ENCODE measurements at regions of chr15 and their contacts with region 1.

Region 1: GRCh38 chr15:71800835-71801745 is 9.3 kb upstream of the NR2E3 start:
- DNase-seq: peak; percentile 77
- H3K4me3 ChIP-seq: no peak overlapping the region
- H3K27ac ChIP-seq: no peak overlapping the region
- H3K4me1 ChIP-seq: no peaks in the 10 kb centered on the region
- H3K27me3 ChIP-seq: no peaks in the 10 kb centered on the region
- CTCF ChIP-seq: peak; percentile 71 to 81
- POLR2A ChIP-seq: no peak

Region 2: DNA sequence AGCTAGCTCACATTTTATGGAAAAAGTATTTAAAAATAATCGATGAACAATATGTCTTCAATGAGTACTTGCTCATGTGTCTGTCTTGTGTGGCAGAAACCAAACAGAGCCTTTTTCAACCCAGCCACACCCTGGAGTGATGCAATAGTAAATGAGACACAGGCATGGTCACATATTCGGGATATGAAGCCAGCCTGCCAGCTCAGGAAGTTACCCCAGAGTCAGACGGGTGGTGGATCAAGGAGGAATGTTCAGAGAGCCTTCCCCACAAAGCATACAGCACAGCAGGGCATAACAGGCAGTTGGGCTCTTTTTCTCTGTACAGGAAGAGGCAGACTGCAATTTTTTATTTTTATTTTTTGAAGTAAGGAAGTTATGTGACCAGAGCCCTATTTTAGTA is 974.5 kb before region 1 on chr15:
- CTCF ChIA-PET with region 1: no interaction called
- POLR2A ChIA-PET with region 1: no interaction called
- dilution Hi-C with region 1: no loop called
- intact Hi-C with region 1: loop called (anchors 1 kb)
- DNase-seq: peak; percentile 36
- H3K4me3 ChIP-seq: no peak overlapping the region
- H3K27ac ChIP-seq: no peak overlapping the region
- H3K4me1 ChIP-seq: no peaks in the 10 kb centered on the region
- H3K27me3 ChIP-seq: no peaks in the 10 kb centered on the region
- CTCF ChIP-seq: no peak
- POLR2A ChIP-seq: no peak

Region 3: GRCh38 chr15:71294886-71295638 is 506.0 kb before region 1 on chr15:
- CTCF ChIA-PET with region 1: no interaction called
- POLR2A ChIA-PET with region 1: no interaction called
- dilution Hi-C with region 1: no loop called
- intact Hi-C with region 1: loop called (anchors 2 kb)
- DNase-seq: peak; percentile 99
- H3K4me3 ChIP-seq: no peak overlapping the region
- H3K27ac ChIP-seq: peak overlapping the region; percentile 97
- H3K4me1 ChIP-seq: peaks cover 35% of the 10 kb centered on the region
- H3K27me3 ChIP-seq: no peaks in the 10 kb centered on the region
- CTCF ChIP-seq: no peak
- POLR2A ChIP-seq: peak; percentile 81

Region 4: GRCh38 chr15:71532994-71533393 is 268.1 kb before region 1 on chr15:
- CTCF ChIA-PET with region 1: no interaction called
- POLR2A ChIA-PET with region 1: no interaction called
- dilution Hi-C with region 1: no loop called
- intact Hi-C with region 1: loop called (anchors 2 kb)
- DNase-seq: no peak
- H3K4me3 ChIP-seq: no peak overlapping the region
- H3K27ac ChIP-seq: no peak overlapping the region
- H3K4me1 ChIP-seq: no peaks in the 10 kb centered on the region
- H3K27me3 ChIP-seq: peaks cover 0 to 2% of the 10 kb centered on the region in 2 experiments
- CTCF ChIP-seq: peak; percentile 37 to 57
- POLR2A ChIP-seq: no peak

Region 5: GRCh38 chr15:71651750-71652186 is 149.3 kb before region 1 on chr15:
- CTCF ChIA-PET with region 1: no interaction called
- POLR2A ChIA-PET with region 1: no interaction called
- dilution Hi-C with region 1: no loop called
- intact Hi-C with region 1: loop called (anchors 2 kb)
- DNase-seq: peak; percentile 64
- H3K4me3 ChIP-seq: no peak overlapping the region
- H3K27ac ChIP-seq: no peak overlapping the region
- H3K4me1 ChIP-seq: peaks cover 15% of the 10 kb centered on the region
- H3K27me3 ChIP-seq: peaks cover 0 to 2% of the 10 kb centered on the region in 2 experiments
- CTCF ChIP-seq: peak; percentile 38 to 43
- POLR2A ChIP-seq: no peak

Region 6: DNA sequence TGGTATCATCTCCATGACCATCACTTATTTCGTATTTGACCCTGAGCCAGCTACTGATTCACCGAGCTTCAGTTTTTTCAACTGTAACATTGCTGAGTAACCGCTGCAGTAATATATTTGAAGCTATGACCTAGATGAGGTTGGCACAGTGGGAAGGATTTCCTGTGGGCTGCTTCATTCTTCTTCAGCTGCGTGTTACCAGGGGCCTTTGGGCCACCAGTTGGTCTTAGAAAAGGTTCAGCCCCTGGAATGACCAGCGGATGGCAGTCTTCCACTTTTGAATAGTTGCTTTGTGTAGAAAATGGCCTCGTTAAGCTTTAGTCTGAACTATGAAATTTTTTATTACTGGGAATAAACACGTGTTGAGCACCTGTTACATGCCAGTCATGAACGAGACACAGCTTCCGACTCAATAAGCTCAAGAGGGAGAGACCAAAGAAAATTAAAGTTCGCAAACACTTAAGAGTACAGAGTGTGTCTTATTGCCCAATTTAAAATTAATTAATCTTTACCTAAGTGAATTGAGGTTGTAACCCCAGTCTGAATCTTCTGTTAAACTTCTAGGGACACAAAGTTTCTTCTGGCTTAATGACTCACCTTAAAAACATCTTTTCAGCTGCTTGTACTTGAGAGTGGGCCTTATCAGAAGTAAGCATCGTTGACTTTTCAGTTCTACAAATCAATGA is 48.3 kb before region 1 on chr15:
- CTCF ChIA-PET with region 1: interaction called, 235 read pairs
- POLR2A ChIA-PET with region 1: interaction called, 3 read pairs
- dilution Hi-C with region 1: no loop called
- intact Hi-C with region 1: loop called (anchors 1 kb)
- DNase-seq: peak; percentile 92
- H3K4me3 ChIP-seq: no peak overlapping the region
- H3K27ac ChIP-seq: peak overlapping the region; percentile 54
- H3K4me1 ChIP-seq: peaks cover 47% of the 10 kb centered on the region
- H3K27me3 ChIP-seq: no peaks in the 10 kb centered on the region
- CTCF ChIP-seq: peak; percentile 71 to 83
- POLR2A ChIP-seq: no peak

Region 7: DNA sequence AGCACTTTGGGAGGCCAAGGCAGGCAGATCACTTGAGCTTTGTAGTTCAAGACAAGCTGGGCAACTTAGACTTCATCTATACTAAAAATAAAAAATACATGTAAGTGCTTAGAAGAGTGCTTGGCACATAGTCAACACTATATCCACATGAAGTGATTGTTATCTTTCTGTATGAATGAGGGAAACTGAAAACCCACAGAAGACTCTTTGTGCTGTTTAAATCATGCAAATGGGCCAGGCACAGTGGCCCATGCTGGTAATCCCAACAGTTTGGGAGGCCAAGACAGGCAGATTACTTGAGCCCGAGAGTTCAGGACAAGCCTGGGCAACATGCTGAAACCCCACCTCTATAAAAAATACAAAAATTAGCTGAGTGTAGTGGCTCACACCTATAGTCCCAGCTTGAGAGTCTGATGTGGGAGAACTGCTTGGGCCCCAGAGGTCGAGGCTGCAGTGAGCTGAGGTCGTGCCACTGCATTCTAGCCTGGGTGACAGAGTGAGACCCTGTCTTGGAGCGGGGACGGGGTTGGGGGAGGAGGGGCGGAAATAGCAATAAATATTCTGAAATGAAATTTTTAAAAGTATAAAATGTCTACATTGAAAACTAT is 139.0 kb after region 1 on chr15:
- CTCF ChIA-PET with region 1: no interaction called
- POLR2A ChIA-PET with region 1: no interaction called
- dilution Hi-C with region 1: no loop called
- intact Hi-C with region 1: no loop called
- DNase-seq: no peak
- H3K4me3 ChIP-seq: no peak overlapping the region
- H3K27ac ChIP-seq: no peak overlapping the region
- H3K4me1 ChIP-seq: no peaks in the 10 kb centered on the region
- H3K27me3 ChIP-seq: no peaks in the 10 kb centered on the region
- CTCF ChIP-seq: no peak
- POLR2A ChIP-seq: no peak

Region 8: GRCh38 chr15:72155635-72156616 is 354.8 kb after region 1 on chr15:
- CTCF ChIA-PET with region 1: interaction called, 97 read pairs
- POLR2A ChIA-PET with region 1: no interaction called
- dilution Hi-C with region 1: no loop called
- intact Hi-C with region 1: loop called (anchors 1 kb)
- DNase-seq: peak; percentile 83
- H3K4me3 ChIP-seq: peak overlapping the region in 2 of 3 experiments; percentile 36 to 54
- H3K27ac ChIP-seq: no peak overlapping the region
- H3K4me1 ChIP-seq: peaks cover 20% of the 10 kb centered on the region
- H3K27me3 ChIP-seq: no peaks in the 10 kb centered on the region
- CTCF ChIP-seq: peak; percentile 80 to 92
- POLR2A ChIP-seq: no peak